AG04449 (cell line): ENCODE measurements at regions of chr1 and their contacts with region 1.

Region 1: GRCh38 chr1:203486618-203487370 is 7.2 kb upstream of the OPTC start:
- DNase-seq: no peak
- H3K4me3 ChIP-seq: no peak overlapping the region
- CTCF ChIP-seq: no peak

Region 2: DNA sequence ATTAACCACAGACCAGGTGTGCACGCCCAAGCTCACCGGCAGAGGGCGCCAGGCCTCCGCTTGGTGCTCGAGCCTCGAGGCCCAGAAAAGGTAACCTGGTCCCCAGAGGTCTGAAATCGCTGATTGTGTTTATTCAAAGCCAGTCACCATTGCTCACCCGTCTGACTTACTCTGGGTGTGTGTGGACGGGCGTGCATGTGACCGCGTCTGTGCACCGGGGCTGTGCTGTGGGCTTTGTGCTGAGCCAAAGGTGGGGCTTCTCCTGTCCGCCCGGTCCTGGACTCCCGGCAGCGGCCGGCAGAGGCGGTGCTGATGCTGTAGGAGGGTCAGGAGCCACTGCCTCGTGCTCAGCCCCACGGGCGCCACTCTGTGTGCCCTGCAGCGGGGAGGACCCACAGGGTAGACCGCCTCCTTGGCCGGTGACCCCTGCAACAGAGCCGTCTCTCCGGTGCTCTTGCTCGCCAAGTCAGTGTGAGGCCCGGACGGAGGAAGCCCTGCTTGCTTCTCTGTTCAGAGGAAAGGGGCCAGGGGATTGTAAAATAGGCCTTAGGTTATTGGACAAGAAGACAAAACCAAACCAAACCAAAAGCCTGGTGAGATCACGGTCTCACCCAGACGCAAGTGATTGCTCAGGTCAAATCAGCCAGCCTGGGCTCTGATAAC is 213.5 kb before region 1 on chr1:
- CTCF ChIA-PET with region 1: interaction called, 106 read pairs
- POLR2A ChIA-PET with region 1: no interaction called
- DNase-seq: peak; percentile 17
- H3K4me3 ChIP-seq: peak overlapping the region; percentile 25
- CTCF ChIP-seq: peak; percentile 96

Region 3: GRCh38 chr1:203361945-203362719 is 124.7 kb before region 1 on chr1:
- CTCF ChIA-PET with region 1: interaction called, 56 read pairs
- POLR2A ChIA-PET with region 1: no interaction called
- DNase-seq: no peak
- H3K4me3 ChIP-seq: no peak overlapping the region
- CTCF ChIP-seq: no peak

Region 4: DNA sequence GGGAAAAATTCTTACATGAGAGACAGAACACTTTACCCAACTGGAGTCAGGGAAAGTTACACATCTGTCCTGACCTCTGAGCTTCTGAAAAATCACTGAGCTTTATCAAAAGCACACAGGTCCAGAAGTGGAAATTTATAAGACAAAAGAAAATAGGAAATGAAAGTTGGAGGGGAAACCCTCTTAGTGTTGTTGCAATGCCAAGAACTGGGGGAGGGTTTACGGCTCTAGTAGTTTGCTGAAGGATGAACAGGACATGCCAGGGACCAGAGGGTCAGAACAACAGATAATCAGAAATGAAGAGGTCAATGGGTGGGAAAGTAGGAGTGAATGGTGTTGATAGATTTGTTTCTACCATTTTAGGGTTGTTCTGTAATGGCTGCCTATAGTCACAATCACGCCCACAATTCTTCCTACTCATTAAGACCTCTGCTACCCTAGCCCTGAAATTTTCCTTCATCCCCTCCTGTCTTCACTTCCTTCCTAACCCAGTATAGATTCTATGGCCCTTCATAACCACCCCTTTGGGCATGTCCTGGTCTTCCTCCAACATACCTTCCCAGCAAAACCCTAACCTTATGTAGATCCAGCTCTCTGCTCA is 105.5 kb before region 1 on chr1:
- CTCF ChIA-PET with region 1: interaction called, 14 read pairs
- POLR2A ChIA-PET with region 1: no interaction called
- DNase-seq: no peak
- H3K4me3 ChIP-seq: no peak overlapping the region
- CTCF ChIP-seq: no peak

Region 5: GRCh38 chr1:203497269-203497777 is 10.5 kb after region 1 on chr1:
- CTCF ChIA-PET with region 1: interaction called, 30 read pairs
- POLR2A ChIA-PET with region 1: no interaction called
- DNase-seq: no peak
- H3K4me3 ChIP-seq: no peak overlapping the region
- CTCF ChIP-seq: no peak